B cell (primary cell): ENCODE measurements at regions of chr17 and their contacts with region 1.

Region 1: GRCh38 chr17:38752119-38752929 is at the start of gene PSMB3:
- DNase-seq: peak; percentile 100
- ATAC-seq: peak; percentile 85
- H3K4me3 ChIP-seq: peak within 1 kb of the TSS; percentile 61 to 100 (median 97)
- H3K4me3 Mint-ChIP-seq: peak within 1 kb of the TSS; percentile 94
- H3K27ac ChIP-seq: peak within 1 kb of the TSS; percentile 88 to 95
- H3K27ac Mint-ChIP-seq: peak within 1 kb of the TSS; percentile 93
- H3K4me1 ChIP-seq: peaks cover 49 to 59% of the 10 kb centered on the region in 2 donors
- H3K4me1 Mint-ChIP-seq: peaks cover 45% of the 10 kb centered on the region
- H3K27me3 ChIP-seq: peaks cover 0 to 37% (median 25%) of the 10 kb centered on the region in 4 experiments
- H3K27me3 Mint-ChIP-seq: peaks cover 21% of the 10 kb centered on the region
- CTCF ChIP-seq: no peak
- total RNA-seq, gene PSMB3: 106 and 109 TPM in 2 replicates

Region 2: DNA sequence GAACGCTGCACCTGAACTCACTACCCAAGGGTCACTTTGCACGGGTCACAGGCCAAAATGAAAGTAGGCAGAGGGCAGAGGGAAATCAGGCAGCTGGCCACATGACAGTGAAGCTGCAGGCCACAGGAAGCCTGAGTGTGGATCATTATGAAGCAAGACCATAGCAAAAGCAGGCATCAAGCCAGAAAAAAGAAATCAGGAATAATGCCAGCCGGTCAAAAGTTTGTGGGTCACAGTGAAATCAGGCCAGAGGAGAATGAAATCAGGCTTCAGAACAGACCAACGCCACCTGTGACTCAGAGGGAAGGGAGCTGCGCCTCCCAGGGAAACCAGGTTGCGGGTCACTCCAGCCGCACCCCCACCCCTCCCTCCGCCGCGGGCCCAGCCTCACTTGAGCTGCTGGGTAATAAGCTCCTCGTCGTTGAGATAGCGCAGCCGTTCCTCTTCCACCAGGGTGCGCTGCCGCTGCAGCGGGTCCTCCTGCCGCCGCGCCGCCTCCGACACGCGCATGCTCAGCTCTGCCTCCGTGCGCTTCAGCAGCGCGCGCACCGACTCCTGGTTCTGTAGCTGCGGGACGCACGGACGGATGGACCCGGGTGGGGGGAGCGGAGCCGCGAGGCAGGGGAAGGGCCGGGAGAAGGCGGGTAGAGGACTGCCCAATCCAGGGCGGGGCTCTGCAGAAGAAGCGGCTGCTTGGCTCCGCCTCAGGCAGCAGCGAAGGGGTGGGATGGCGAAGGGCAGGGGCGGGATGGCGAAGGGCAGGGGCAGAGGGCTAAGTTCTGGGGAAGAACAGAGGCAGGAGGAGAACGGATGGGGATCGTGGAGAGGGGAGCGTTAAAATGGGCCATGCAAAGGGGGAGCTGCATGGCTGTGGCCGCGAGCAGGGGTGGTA is 194.2 kb before region 1 on chr17:
- CTCF ChIA-PET with region 1: interaction called, 5 read pairs
- POLR2A ChIA-PET with region 1: interaction called, 3 read pairs
- intact Hi-C with region 1: loop called (anchors 5 kb)
- DNase-seq: peak; percentile 93
- ATAC-seq: peak; percentile 76
- H3K4me3 ChIP-seq: peak overlapping the region; percentile 40 to 90 (median 66)
- H3K4me3 Mint-ChIP-seq: peak overlapping the region; percentile 99
- H3K27ac ChIP-seq: no peak overlapping the region
- H3K27ac Mint-ChIP-seq: peak overlapping the region; percentile 88
- H3K4me1 ChIP-seq: peaks cover 23 to 38% of the 10 kb centered on the region in 2 donors
- H3K4me1 Mint-ChIP-seq: peaks cover 30% of the 10 kb centered on the region
- H3K27me3 ChIP-seq: peaks cover 0 to 31% (median 20%) of the 10 kb centered on the region in 4 experiments
- H3K27me3 Mint-ChIP-seq: peaks cover 27% of the 10 kb centered on the region
- CTCF ChIP-seq: peak; percentile 92

Region 3: GRCh38 chr17:38702166-38702899 is 50.0 kb before region 1 on chr17:
- CTCF ChIA-PET with region 1: interaction called, 3 read pairs
- POLR2A ChIA-PET with region 1: interaction called, 10 read pairs
- intact Hi-C with region 1: loop called (anchors 1 kb)
- DNase-seq: peak; percentile 92
- ATAC-seq: peak; percentile 42
- H3K4me3 ChIP-seq: peak overlapping the region; percentile 76 to 95 (median 93)
- H3K4me3 Mint-ChIP-seq: peak overlapping the region; percentile 99
- H3K27ac ChIP-seq: peak overlapping the region; percentile 91 to 97
- H3K27ac Mint-ChIP-seq: peak overlapping the region; percentile 99
- H3K4me1 ChIP-seq: peaks cover 17 to 51% of the 10 kb centered on the region in 2 donors
- H3K4me1 Mint-ChIP-seq: peaks cover 50% of the 10 kb centered on the region
- H3K27me3 ChIP-seq: no peaks in the 10 kb centered on the region
- H3K27me3 Mint-ChIP-seq: no peaks in the 10 kb centered on the region
- CTCF ChIP-seq: no peak

Region 4: DNA sequence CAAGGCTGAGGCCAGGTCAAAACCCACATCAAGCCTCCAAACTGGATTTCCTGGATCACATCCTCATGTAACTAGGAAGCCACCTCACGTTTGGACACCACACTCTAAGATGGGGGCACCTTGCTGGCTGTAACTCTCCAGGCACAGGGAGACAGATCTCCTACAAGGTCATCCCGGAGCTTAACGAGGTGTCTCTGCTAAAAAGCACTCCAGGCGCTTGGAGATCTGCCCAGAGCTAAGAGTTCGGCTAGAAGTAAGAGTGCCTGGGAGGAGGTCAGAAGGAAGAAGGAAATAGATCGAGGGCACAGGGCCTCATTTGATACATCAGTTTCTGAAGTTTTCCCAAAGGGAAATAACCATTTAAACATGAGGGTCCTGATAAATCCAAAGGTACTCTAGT is 16.1 kb after region 1 on chr17:
- CTCF ChIA-PET with region 1: no interaction called
- POLR2A ChIA-PET with region 1: no interaction called
- intact Hi-C with region 1: no loop called
- DNase-seq: no peak
- ATAC-seq: no peak
- H3K4me3 ChIP-seq: no peak overlapping the region
- H3K4me3 Mint-ChIP-seq: no peak overlapping the region
- H3K27ac ChIP-seq: no peak overlapping the region
- H3K27ac Mint-ChIP-seq: no peak overlapping the region
- H3K4me1 ChIP-seq: no peaks in the 10 kb centered on the region
- H3K4me1 Mint-ChIP-seq: no peaks in the 10 kb centered on the region
- H3K27me3 ChIP-seq: no peaks in the 10 kb centered on the region
- H3K27me3 Mint-ChIP-seq: no peaks in the 10 kb centered on the region
- CTCF ChIP-seq: no peak

Region 5: DNA sequence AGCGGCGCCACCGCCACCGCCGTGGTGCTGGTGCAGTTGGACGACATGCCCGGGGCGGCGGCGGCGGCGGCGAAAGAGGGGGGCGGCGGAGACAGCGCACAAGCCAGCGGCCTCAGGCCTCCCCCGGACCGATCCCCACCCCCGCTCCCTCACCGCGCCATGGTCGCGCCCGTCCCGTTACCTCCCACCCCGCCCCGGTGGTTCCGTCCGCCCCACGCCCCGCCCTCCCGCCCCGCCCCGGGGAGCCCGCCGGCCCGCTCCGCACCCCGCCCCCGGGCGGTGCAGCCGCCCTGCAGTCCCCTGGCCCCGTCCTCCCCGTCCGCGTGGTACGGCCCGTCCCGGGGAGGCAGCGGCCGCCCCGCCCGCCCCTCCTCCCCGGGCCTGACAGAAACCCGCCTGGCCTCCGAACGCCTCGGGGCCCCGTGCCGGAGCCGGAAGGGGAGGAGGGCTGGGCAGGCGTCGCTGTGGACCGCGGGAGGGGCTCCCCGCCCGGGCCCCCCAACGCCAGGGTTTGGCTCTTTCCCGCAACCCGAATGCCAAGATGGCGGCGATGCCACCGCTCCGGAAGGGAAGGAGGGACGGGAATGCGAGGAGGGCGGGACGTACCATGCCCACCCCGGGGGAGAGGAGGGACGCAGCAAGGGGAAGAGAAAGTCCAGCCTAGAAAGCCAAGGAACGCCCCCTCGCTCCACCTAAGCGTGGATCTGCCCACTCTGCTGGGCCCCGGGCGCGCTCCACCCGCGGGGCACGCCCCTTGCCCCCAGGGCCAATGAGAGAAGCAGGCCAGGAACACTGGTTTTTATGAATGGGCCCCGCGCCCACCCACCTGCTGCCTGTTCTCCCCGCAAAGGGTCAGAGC is 47.3 kb after region 1 on chr17 and contains the start of gene PIP4K2B:
- CTCF ChIA-PET with region 1: no interaction called
- POLR2A ChIA-PET with region 1: interaction called, 4 read pairs
- intact Hi-C with region 1: loop called (anchors 1 kb)
- DNase-seq: peak; percentile 94
- ATAC-seq: peak; percentile 84
- H3K4me3 ChIP-seq: peak within 1 kb of the TSS; percentile 64 to 88 (median 75)
- H3K4me3 Mint-ChIP-seq: peak within 1 kb of the TSS; percentile 99
- H3K27ac ChIP-seq: peak within 1 kb of the TSS; percentile 72 to 79
- H3K27ac Mint-ChIP-seq: peak within 1 kb of the TSS; percentile 96
- H3K4me1 ChIP-seq: peaks cover 17 to 25% of the 10 kb centered on the region in 2 donors
- H3K4me1 Mint-ChIP-seq: peaks cover 34% of the 10 kb centered on the region
- H3K27me3 ChIP-seq: no peaks in the 10 kb centered on the region
- H3K27me3 Mint-ChIP-seq: no peaks in the 10 kb centered on the region
- CTCF ChIP-seq: no peak
- total RNA-seq, gene PIP4K2B: 42.9 and 46.8 TPM in 2 replicates

Region 6: GRCh38 chr17:38853292-38854219 is 101.2 kb after region 1 on chr17 and contains the start of gene RPL23:
- CTCF ChIA-PET with region 1: no interaction called
- POLR2A ChIA-PET with region 1: interaction called, 4 read pairs
- intact Hi-C with region 1: loop called (anchors 1 kb)
- DNase-seq: peak; percentile 98
- ATAC-seq: peak; percentile 91
- H3K4me3 ChIP-seq: peak within 1 kb of the TSS; percentile 70 to 99 (median 73)
- H3K4me3 Mint-ChIP-seq: peak within 1 kb of the TSS; percentile 98
- H3K27ac ChIP-seq: peak within 1 kb of the TSS; percentile 92
- H3K27ac Mint-ChIP-seq: peak within 1 kb of the TSS; percentile 100
- H3K4me1 ChIP-seq: peaks cover 23 to 27% of the 10 kb centered on the region in 2 donors
- H3K4me1 Mint-ChIP-seq: peaks cover 41% of the 10 kb centered on the region
- H3K27me3 ChIP-seq: no peaks in the 10 kb centered on the region
- H3K27me3 Mint-ChIP-seq: no peaks in the 10 kb centered on the region
- CTCF ChIP-seq: no peak
- total RNA-seq, gene RPL23: 1,692 and 1,753 TPM in 2 replicates